ENCODE measurements at regions of chr15 and their contacts with region 1.

Region 1: DNA sequence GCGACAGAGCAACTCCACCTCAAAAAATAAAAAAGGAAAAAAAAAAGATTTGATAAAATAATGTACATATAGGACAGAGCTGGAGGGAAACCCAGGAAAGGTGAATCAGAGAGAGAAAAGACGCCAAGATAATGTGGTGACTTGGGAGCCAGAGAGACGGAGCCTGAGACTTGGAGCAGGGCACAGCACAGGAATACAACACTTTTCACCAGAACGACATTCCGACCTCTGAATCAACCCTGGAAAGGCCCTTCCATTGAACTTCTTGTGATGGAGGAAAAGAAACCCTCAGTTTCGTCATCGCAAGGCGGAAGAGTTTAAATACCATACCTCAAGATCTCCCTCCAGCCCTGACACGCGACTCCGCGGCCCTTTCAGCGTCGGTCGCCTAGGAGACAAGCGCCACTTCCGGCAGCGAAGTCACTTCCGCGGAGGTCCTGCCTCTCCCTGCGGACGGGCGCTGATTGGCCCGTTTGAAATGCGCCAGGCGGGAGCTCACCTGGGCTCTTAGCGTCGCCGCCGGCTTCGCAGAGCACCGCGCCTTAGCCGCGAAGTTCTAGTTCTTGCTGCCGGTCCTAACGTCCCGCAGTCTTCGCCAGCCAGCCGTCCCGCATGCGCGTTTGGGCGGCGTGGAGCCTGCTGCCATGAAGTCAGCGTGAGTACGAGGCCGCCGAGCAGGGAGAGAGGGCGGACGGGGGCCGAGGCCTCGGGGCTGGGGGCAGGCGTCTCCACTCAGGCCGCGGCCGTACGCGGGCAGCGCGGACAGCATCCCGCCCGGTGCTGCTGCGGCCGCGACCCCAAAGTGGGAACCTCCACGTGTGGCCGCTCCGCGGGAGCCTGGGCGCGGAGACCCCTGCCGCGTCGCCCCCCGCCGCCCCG is at the start of gene KIF23:
- DNase-seq: peak; percentile 93
- H3K4me3 ChIP-seq: peak within 1 kb of the TSS; percentile 93 to 94 (median 93)
- H3K27ac ChIP-seq: peak within 1 kb of the TSS; percentile 54
- H3K4me1 ChIP-seq: peaks cover 17% of the 10 kb centered on the region
- H3K27me3 ChIP-seq: no peaks in the 10 kb centered on the region
- CTCF ChIP-seq: no peak
- POLR2A ChIP-seq: peak; percentile 40
- total RNA-seq, gene KIF23: 55.7 and 64.7 TPM in 2 replicates

Region 2: GRCh38 chr15:69384626-69385598 is 29.1 kb before region 1 on chr15:
- CTCF ChIA-PET with region 1: no interaction called
- POLR2A ChIA-PET with region 1: no interaction called
- dilution Hi-C with region 1: no loop called
- intact Hi-C with region 1: no loop called
- DNase-seq: no peak
- H3K4me3 ChIP-seq: no peak overlapping the region
- H3K27ac ChIP-seq: no peak overlapping the region
- H3K4me1 ChIP-seq: no peaks in the 10 kb centered on the region
- H3K27me3 ChIP-seq: peaks cover 0 to 1% of the 10 kb centered on the region in 2 experiments
- CTCF ChIP-seq: no peak
- POLR2A ChIP-seq: no peak

Region 3: GRCh38 chr15:69452692-69453521 is 38.8 kb after region 1 on chr15 and contains the start of gene RPLP1:
- CTCF ChIA-PET with region 1: interaction called, 4 read pairs
- POLR2A ChIA-PET with region 1: interaction called, 12 read pairs
- dilution Hi-C with region 1: no loop called
- intact Hi-C with region 1: loop called (anchors 1 kb)
- DNase-seq: peak; percentile 95
- H3K4me3 ChIP-seq: peak within 1 kb of the TSS; percentile 46 to 83 (median 78)
- H3K27ac ChIP-seq: peak within 1 kb of the TSS; percentile 78
- H3K4me1 ChIP-seq: peaks cover 24% of the 10 kb centered on the region
- H3K27me3 ChIP-seq: no peaks in the 10 kb centered on the region
- CTCF ChIP-seq: no peak
- POLR2A ChIP-seq: peak; percentile 100
- total RNA-seq, gene RPLP1: 1,595 and 1,603 TPM in 2 replicates

Measured in endothelial cell of umbilical vein (primary cell).